Mammary epithelial cell (primary cell): ENCODE measurements at regions of chr12 and their contacts with region 1.

Region 1: DNA sequence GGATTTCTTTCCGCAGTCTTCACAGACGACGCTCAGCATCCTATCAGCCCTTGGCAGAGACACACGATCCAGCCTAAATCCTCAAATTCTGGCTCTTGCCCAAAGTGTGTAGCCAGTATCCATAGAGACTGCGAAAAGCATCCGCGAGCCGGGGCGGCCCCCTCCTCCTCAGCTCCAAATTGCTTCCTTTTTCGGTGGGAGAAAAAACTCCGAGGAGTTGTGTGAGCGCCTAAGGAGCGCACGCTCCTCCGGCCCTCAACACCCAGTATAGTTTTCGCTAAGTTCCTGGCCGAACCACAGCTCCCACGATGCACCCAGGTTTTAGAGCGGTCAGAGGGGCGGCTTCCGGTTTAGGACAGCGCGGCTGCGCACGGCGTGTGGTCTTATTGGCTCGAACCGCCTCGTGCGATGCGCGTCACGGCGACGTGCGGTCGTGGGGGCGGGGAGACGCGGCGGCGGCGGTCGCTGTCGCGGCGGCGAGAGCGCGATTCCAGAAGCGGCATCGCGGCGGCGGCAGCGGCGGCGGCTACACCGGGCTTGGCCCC is at the start of gene ADIPOR2:
- DNase-seq: peak; percentile 96
- H3K4me3 ChIP-seq: peak within 1 kb of the TSS; percentile 92 to 98 (median 93)
- H3K27ac ChIP-seq: peak within 1 kb of the TSS; percentile 93
- H3K4me1 ChIP-seq: peaks cover 8% of the 10 kb centered on the region
- H3K27me3 ChIP-seq: no peaks in the 10 kb centered on the region
- CTCF ChIP-seq: no peak
- total RNA-seq, gene ADIPOR2: 46.7 to 73.0 TPM

Region 2: DNA sequence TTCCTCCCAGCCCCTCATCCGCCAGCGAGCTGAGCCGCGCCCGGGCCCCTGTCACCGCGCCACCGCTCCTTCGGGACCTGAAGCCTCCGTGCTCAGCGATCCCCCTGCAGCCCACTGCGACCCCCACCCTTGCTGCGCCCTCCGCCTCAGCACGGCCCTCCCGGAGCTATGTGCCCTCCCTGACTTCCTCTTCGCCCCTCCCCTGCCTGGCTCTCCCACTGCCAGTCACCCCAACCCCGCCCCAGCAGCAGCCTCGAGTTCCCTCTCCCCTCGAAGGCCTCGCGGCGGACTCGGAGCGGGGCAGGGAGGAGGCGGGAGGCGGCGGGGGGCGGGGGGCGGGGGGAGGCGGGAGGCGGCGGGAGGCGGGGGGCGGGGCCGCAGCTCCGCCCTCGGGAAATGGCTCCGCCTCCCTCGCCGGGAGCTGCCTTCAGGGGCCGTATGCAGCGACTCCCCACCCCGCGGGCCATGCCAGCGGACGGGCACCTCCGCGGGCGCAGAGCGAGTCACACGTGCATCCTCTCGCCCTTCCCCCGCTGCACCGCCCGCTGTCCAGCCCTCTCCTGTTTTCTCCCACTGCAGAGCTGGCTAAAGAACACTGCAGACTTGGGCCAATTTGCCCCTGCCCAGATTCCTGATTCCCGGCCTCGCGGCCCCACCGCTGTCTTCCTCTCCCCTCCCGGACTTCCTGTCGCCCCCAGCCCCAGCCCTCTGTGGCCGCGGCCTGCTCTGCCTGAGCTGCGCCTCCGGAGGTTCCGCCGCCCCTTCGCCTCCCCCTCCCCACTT is 28.9 kb before region 1 on chr12:
- CTCF ChIA-PET with region 1: no interaction called
- dilution Hi-C with region 1: no loop called
- in situ Hi-C with region 1: no loop called
- intact Hi-C with region 1: loop called (anchors 2 kb)
- DNase-seq: peak; percentile 80
- H3K4me3 ChIP-seq: peak overlapping the region in 2 of 3 experiments; percentile 34 to 53
- H3K27ac ChIP-seq: peak overlapping the region; percentile 29
- H3K4me1 ChIP-seq: peaks cover 22% of the 10 kb centered on the region
- H3K27me3 ChIP-seq: no peaks in the 10 kb centered on the region
- CTCF ChIP-seq: no peak

Region 3: GRCh38 chr12:1776170-1776948 is 85.7 kb after region 1 on chr12:
- CTCF ChIA-PET with region 1: no interaction called
- dilution Hi-C with region 1: no loop called
- in situ Hi-C with region 1: no loop called
- intact Hi-C with region 1: loop called (anchors 5 kb)
- DNase-seq: peak; percentile 84
- H3K4me3 ChIP-seq: no peak overlapping the region
- H3K27ac ChIP-seq: no peak overlapping the region
- H3K4me1 ChIP-seq: peaks cover 32% of the 10 kb centered on the region
- H3K27me3 ChIP-seq: no peaks in the 10 kb centered on the region
- CTCF ChIP-seq: no peak